ENCODE measurements at regions of chr12 and their contacts with region 1.

Region 1: DNA sequence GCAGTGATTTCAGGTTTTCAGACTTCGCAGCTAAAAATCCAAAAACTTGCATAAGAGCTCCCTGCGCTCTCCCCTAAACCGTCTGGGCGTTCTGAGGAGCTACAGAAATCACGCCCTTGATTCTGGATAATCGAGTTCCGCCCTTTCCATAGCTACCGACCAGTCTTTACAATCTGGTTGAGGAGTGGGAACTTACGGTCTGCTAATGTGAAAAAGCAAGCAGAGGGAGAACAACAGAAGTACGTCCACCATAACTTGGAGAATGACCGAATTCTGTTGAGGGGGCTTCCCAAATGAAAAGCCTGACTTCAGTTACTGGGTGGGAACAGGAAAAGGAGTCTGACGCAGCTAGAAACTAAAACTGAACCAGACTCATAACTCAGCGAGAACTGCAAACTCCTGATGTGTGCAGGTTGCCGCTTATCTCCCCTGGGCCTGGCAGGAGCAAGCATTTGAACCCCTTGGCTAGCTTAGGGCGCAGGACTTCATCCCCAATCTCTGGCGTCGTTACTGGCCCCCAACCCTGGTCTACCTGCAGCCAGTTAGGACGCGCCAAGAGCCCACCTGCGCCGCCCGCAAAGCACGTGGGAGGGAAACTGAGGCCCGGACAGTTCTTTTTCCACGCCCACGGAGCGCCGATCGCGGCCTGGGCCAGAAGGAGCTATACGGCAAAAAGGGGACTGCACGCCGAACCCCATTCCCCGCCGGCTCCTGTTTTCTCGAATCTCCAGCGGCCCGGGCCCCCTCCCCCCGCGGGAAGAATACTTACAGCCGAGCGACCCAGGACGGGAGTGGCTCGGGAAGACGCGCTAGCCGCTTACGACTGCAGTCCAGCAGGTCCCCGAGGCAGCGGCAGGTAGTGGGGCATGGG is 838 bp downstream of the LRIG3 start:
- DNase-seq: peak; percentile 71
- H3K4me3 ChIP-seq: peak overlapping the region; percentile 74 to 92 (median 86)
- H3K27ac ChIP-seq: peak overlapping the region; percentile 90 to 98 (median 96)
- H3K4me1 ChIP-seq: peaks cover 0 to 32% (median 25%) of the 10 kb centered on the region in 4 donors
- H3K27me3 ChIP-seq: no peaks in the 10 kb centered on the region
- CTCF ChIP-seq: no peak
- EP300 ChIP-seq: no peak
- POLR2A ChIP-seq: peak in 1 of 2 donors; percentile 20

Region 2: DNA sequence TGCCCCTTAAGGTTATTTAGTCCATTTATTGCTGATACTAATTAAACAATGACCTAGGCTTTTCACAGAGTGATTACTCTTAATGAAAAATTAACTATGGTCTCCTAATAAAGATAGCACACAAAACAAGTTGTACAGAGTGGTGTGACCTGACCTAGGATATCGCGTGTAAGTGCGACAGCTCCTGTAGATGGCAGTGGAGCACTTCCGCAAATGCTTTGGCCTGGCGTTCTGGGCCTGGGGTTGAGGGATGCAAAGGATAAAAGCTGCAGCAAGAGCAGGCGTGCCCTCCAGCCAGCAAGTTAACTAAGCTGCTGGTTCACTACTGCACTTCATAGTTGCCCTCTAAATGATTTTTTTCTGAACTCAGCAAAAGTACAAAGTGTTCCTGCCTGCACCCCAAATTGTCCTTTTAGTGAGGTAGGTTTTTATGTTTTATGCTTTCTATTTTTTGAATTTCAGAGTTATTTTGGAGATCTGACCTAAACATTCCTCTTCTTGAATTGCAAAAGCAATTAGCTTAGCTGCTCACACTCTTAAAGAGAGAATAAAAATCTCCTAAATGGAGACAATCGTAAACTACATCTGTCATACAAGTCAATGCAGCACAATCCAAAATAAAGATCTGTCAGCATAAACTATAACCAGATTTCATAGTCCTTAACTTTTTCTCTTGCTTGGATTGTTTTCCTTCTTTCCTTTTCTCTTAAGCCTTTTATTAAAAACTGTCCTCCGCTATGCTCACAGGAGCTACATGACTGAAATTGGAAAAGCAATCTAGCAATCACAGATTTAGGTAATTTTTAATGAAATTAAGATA is 378.8 kb before region 1 on chr12:
- intact Hi-C with region 1: loop called (anchors 2 kb)
- DNase-seq: peak; percentile 90
- H3K4me3 ChIP-seq: no peak overlapping the region
- H3K27ac ChIP-seq: peak overlapping the region in 3 of 4 donors; percentile 1 to 16 (median 7)
- H3K4me1 ChIP-seq: peaks cover 0 to 24% (median 15%) of the 10 kb centered on the region in 4 donors
- H3K27me3 ChIP-seq: no peaks in the 10 kb centered on the region
- CTCF ChIP-seq: peak; percentile 56 to 70 (median 65)
- EP300 ChIP-seq: no peak
- POLR2A ChIP-seq: no peak

Region 3: GRCh38 chr12:58592475-58593207 is 326.8 kb before region 1 on chr12:
- intact Hi-C with region 1: loop called (anchors 10 kb)
- DNase-seq: no peak
- H3K4me3 ChIP-seq: no peak overlapping the region
- H3K27ac ChIP-seq: peak overlapping the region; percentile 10 to 86 (median 65)
- H3K4me1 ChIP-seq: peaks cover 0 to 19% (median 17%) of the 10 kb centered on the region in 4 donors
- H3K27me3 ChIP-seq: no peaks in the 10 kb centered on the region
- CTCF ChIP-seq: no peak
- EP300 ChIP-seq: peak in 3 of 4 donors; percentile 34 to 82 (median 82)
- POLR2A ChIP-seq: no peak

Region 4: DNA sequence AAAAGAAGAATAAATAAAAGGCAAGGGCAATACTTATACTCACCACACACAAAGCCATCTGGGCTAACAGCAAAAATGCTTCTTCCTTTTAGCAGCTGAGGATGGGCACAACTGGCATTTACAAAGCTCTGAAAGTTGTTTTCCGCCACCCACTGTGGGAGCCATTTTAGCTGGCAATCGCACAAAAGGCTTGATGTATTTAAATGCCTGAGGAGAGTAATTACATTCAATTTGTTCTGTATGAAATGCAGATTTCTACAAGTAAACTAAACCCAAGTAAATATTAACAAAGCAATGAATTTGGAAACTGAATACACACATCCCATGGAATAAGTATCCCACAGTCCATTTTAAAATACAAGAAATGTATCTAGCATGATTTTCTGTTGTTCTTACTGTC is 36.6 kb before region 1 on chr12:
- intact Hi-C with region 1: loop called (anchors 5 kb)
- DNase-seq: no peak
- H3K4me3 ChIP-seq: no peak overlapping the region
- H3K27ac ChIP-seq: peak overlapping the region in 3 of 4 donors; percentile 15 to 20 (median 20)
- H3K4me1 ChIP-seq: peaks cover 0 to 42% (median 13%) of the 10 kb centered on the region in 4 donors
- H3K27me3 ChIP-seq: no peaks in the 10 kb centered on the region
- CTCF ChIP-seq: no peak
- EP300 ChIP-seq: no peak
- POLR2A ChIP-seq: no peak

Region 5: DNA sequence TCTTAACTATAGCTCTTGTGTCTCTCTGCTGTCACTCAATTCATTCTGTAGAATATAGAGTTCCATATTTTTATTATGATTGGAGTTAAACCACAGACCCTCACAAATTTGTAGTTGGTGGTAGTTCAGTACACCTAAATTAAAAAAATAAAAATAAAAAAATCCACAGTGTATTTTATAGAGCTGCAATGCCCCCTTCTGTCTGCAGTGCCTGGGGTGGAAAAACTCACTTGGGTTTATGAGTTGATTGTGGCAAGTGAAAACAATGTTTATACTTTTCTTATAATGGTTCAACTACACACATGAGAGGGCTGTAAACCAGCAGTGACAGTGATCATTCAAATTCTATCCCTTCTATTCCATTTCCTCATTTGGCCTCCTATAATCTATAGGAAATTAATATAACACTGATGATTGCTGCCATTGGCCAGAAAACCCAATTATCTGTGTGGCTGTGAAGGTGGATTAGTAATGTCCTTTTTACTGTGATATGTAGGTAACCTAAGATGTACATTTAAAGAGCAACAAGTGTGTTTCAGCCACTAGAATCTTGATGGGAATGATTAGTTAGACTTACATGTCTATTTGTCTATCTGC is 167.7 kb after region 1 on chr12:
- intact Hi-C with region 1: loop called (anchors 5 kb)
- DNase-seq: no peak
- H3K4me3 ChIP-seq: no peak overlapping the region
- H3K27ac ChIP-seq: no peak overlapping the region
- H3K4me1 ChIP-seq: peaks cover 0 to 37% (median 7%) of the 10 kb centered on the region in 4 donors
- H3K27me3 ChIP-seq: no peaks in the 10 kb centered on the region
- CTCF ChIP-seq: peak in 3 of 4 experiments; percentile 35 to 56 (median 43)
- EP300 ChIP-seq: no peak
- POLR2A ChIP-seq: no peak

Region 6: GRCh38 chr12:59595883-59596540 is 676.5 kb after region 1 on chr12 and contains the start of gene SLC16A7:
- intact Hi-C with region 1: loop called (anchors 5 kb)
- DNase-seq: peak; percentile 95
- H3K4me3 ChIP-seq: peak within 1 kb of the TSS; percentile 60 to 79 (median 68)
- H3K27ac ChIP-seq: peak within 1 kb of the TSS; percentile 94 to 99 (median 97)
- H3K4me1 ChIP-seq: peaks cover 0 to 22% (median 8%) of the 10 kb centered on the region in 4 donors
- H3K27me3 ChIP-seq: no peaks in the 10 kb centered on the region
- CTCF ChIP-seq: no peak
- EP300 ChIP-seq: no peak
- POLR2A ChIP-seq: peak; percentile 10 to 37
- total RNA-seq, gene SLC16A7: 27.1 to 38.8 (median 36.3) TPM

Measured in sigmoid colon (tissue), 7 donors.